ENCODE measurements at regions of chr6 and their contacts with region 1.

Region 1: DNA sequence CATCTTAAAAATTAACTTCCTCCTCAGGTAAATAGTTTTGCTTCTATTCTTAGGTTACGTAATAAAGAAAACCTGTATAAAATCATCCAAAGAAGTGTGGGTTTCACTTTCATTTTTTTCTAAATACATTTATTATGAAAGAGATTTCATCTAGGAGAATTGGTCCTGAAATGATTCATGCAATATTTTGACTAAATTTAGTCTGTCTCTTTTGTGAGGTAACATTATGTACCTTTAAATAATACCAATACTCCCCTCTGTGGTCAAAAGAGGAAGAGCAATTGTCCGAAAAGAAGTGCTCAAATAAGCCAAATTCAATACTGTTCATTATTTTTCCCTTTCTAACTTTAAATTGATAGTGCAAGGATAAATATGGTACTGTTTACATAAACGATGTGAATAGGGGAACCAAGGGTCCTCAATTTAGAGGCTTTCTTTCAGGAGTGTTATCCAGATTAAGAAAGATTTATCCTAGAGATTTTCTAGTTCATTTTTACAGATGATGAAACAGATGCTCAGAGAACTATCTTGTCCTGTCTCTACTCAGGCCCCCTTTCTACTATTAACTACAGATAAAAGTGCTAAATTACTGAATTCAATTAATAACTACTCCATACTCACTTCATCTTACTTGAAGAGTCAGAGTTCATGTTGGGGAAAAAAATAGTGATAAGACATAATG is 26.2 kb downstream of the CYP39A1 start:
- DNase-seq: peak; percentile 22
- ATAC-seq: peak; percentile 74; the same call in 1 of the 2 replicates
- H3K4me3 ChIP-seq: no peak overlapping the region
- H3K27ac ChIP-seq: no peak overlapping the region
- H3K4me1 ChIP-seq: no peaks in the 10 kb centered on the region
- H3K27me3 ChIP-seq: no peaks in the 10 kb centered on the region
- CTCF ChIP-seq: peak; percentile 42 to 67 (median 66); a peak in 5 of 6 replicates
- POLR2A ChIP-seq: no peak
- RAD21 ChIP-seq: peak; percentile 74

Region 2: GRCh38 chr6:46221222-46221793 is 405.1 kb before region 1 on chr6:
- CTCF ChIA-PET with region 1: no interaction called
- POLR2A ChIA-PET with region 1: no interaction called
- RAD21 ChIA-PET with region 1: no interaction called
- intact Hi-C with region 1: loop called (anchors 5 kb)
- DNase-seq: peak; percentile 18
- ATAC-seq: peak; percentile 83
- H3K4me3 ChIP-seq: no peak overlapping the region
- H3K27ac ChIP-seq: no peak overlapping the region
- H3K4me1 ChIP-seq: no peaks in the 10 kb centered on the region
- H3K27me3 ChIP-seq: 0 out of 2 replicates have a peak, but pooled peaks cover 4% of the 10 kb centered on the region
- CTCF ChIP-seq: peak; percentile 66 to 87 (median 74)
- POLR2A ChIP-seq: no peak
- RAD21 ChIP-seq: peak; percentile 85

Region 3: DNA sequence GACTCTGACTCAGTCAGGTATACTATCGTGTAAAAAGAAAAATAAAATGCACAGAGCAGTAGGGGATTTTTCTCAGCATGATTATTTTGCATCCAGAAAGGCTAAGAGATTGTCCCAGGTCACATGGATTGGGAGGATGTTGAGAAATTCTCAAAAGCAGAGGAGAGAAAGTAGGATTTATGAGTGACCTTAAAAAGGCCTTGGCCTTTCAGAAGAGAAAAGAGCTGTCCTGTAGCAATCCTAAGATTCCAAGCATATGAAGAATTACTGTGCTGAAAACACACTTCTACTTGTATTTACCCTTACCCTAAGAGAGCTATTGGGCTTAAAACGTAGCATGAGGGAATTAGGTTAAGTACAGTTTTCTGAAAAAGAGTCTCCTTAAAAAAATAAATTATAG is 305.9 kb before region 1 on chr6:
- CTCF ChIA-PET with region 1: no interaction called
- POLR2A ChIA-PET with region 1: no interaction called
- RAD21 ChIA-PET with region 1: no interaction called
- intact Hi-C with region 1: no loop called
- DNase-seq: no peak
- ATAC-seq: no peak
- H3K4me3 ChIP-seq: no peak overlapping the region
- H3K27ac ChIP-seq: no peak overlapping the region
- H3K4me1 ChIP-seq: no peaks in the 10 kb centered on the region
- H3K27me3 ChIP-seq: no peaks in the 10 kb centered on the region
- CTCF ChIP-seq: no peak
- POLR2A ChIP-seq: no peak
- RAD21 ChIP-seq: no peak

Region 4: GRCh38 chr6:46419576-46420002 is 206.8 kb before region 1 on chr6:
- CTCF ChIA-PET with region 1: interaction called, 4 read pairs
- POLR2A ChIA-PET with region 1: no interaction called
- RAD21 ChIA-PET with region 1: no interaction called
- intact Hi-C with region 1: loop called (anchors 1 kb)
- DNase-seq: peak; percentile 60
- ATAC-seq: peak; percentile 63; the same call in 1 of the 2 replicates
- H3K4me3 ChIP-seq: no peak overlapping the region
- H3K27ac ChIP-seq: no peak overlapping the region
- H3K4me1 ChIP-seq: no peaks in the 10 kb centered on the region
- H3K27me3 ChIP-seq: no peaks in the 10 kb centered on the region
- CTCF ChIP-seq: peak; percentile 67 to 88 (median 73)
- POLR2A ChIP-seq: no peak
- RAD21 ChIP-seq: peak; percentile 91

Region 5: GRCh38 chr6:46440141-46440540 is 186.2 kb before region 1 on chr6:
- CTCF ChIA-PET with region 1: no interaction called
- POLR2A ChIA-PET with region 1: no interaction called
- RAD21 ChIA-PET with region 1: no interaction called
- intact Hi-C with region 1: no loop called
- DNase-seq: no peak
- ATAC-seq: no peak
- H3K4me3 ChIP-seq: no peak overlapping the region
- H3K27ac ChIP-seq: no peak overlapping the region
- H3K4me1 ChIP-seq: no peaks in the 10 kb centered on the region
- H3K27me3 ChIP-seq: no peaks in the 10 kb centered on the region
- CTCF ChIP-seq: no peak
- POLR2A ChIP-seq: no peak
- RAD21 ChIP-seq: no peak

Region 6: DNA sequence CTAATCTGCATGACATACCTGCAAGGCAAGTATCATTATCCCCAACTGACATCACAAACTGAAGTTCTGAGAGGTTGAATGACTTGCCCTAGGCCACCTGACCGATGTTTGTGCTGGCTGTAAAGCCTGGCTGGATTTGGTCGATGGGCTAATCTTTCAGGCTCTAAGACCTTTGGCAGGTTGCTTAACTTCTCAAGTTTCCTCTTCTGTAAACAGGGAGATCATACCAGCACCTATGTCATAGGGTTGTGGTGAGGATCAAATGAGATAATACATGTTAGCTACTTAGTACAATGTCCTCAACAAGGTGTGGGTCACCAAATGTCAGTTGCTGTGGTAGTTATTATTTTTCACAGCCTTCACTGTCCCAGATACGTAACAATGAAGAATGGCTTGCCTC is 134.6 kb after region 1 on chr6:
- CTCF ChIA-PET with region 1: no interaction called
- POLR2A ChIA-PET with region 1: no interaction called
- RAD21 ChIA-PET with region 1: no interaction called
- intact Hi-C with region 1: no loop called
- DNase-seq: no peak
- ATAC-seq: no peak
- H3K4me3 ChIP-seq: no peak overlapping the region
- H3K27ac ChIP-seq: no peak overlapping the region
- H3K4me1 ChIP-seq: peaks cover 4 to 9% of the 10 kb centered on the region in 2 experiments; a peak in 3 of 4 replicates
- H3K27me3 ChIP-seq: no peaks in the 10 kb centered on the region
- CTCF ChIP-seq: no peak
- POLR2A ChIP-seq: no peak
- RAD21 ChIP-seq: no peak